Heart left ventricle (tissue), 16 donors: ENCODE measurements at regions of chr7 and their contacts with region 1.

Region 1: GRCh38 chr7:37181550-37181932 is 267.1 kb downstream of the ELMO1 start:
- DNase-seq: no peak
- ATAC-seq: no peak
- H3K4me3 ChIP-seq: no peak overlapping the region
- H3K27ac ChIP-seq: no peak overlapping the region
- H3K4me1 ChIP-seq: peaks cover 0 to 8% (median 0%) of the 10 kb centered on the region in 12 donors
- H3K27me3 ChIP-seq: no peaks in the 10 kb centered on the region
- CTCF ChIP-seq: no peak
- POLR2A ChIP-seq: no peak

Region 2: DNA sequence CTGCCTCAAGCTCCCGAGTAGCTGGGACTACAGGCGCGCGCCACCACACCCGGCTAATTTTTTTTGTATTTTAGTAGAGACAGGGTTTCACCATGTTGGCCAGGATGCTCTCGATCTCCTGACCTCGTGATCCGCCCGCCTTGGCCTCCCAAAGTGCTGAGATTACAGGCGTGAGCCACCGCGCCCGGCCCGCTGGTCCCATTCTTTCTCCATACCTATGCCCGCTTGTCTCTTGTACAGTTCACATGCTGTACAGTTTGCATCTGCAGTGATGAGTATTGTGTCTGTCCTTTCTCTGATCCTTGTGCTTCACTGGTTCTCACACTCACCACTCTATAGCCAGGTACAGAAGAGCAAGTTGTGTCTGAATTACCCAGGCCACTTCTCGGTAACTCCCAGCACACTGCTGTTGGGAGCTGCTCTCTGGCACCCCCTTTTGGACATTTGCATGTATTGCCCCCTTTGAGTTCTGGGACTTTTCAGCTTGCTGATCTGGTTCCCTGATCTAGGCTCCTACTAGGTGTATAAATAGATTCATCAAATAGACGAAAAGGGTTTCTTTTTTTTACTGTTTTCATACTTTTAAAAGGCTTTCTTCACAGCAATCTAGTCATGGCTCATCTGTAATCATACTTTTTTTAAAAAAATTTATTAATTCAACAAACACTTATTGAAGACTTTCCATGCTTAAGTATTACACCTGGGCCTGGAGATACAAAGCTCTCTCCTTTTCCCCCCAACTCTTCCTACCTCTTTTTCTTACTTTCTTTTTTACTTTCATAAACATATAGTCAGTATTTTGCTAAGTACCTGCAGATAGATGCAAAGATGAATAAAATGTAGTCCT is 510.7 kb before region 1 on chr7:
- intact Hi-C with region 1: loop called in 1 of 10 experiments (anchors 10 kb)
- DNase-seq: peak in 3 of 5 donors; percentile 19 to 41 (median 35)
- ATAC-seq: peak in 3 of 4 donors; percentile 46 to 77 (median 48)
- H3K4me3 ChIP-seq: no peak overlapping the region
- H3K27ac ChIP-seq: no peak overlapping the region
- H3K4me1 ChIP-seq: no peaks in the 10 kb centered on the region
- H3K27me3 ChIP-seq: no peaks in the 10 kb centered on the region
- CTCF ChIP-seq: peak; percentile 63 to 89 (median 78)
- POLR2A ChIP-seq: no peak

Region 3: DNA sequence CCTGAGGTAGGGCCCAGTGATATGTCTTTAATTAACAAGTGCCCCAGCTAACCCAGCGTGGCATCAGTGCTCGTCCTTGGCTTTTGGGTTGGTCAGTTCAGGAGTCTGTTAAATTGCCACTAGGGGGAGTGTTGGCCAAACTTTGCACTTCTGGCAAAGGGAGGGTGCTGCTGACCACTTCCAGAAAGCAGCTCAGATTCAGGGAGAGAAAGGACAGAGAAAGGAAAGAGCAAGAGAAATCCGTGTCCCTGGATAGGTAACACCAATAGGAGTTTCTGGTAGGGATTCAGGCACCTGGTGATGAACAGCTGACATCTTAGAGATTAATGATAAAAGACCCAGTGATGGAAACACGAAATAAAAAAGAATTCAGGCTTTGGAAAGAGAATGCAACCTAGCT is 214.2 kb before region 1 on chr7:
- intact Hi-C with region 1: loop called (anchors 1 to 5 kb)
- DNase-seq: peak; percentile 59 to 67 (median 63)
- ATAC-seq: peak; percentile 85 to 94 (median 92)
- H3K4me3 ChIP-seq: no peak overlapping the region
- H3K27ac ChIP-seq: no peak overlapping the region
- H3K4me1 ChIP-seq: peaks cover 0 to 49% (median 7%) of the 10 kb centered on the region in 12 donors
- H3K27me3 ChIP-seq: no peaks in the 10 kb centered on the region
- CTCF ChIP-seq: peak; percentile 70 to 89 (median 84)
- POLR2A ChIP-seq: no peak

Region 4: DNA sequence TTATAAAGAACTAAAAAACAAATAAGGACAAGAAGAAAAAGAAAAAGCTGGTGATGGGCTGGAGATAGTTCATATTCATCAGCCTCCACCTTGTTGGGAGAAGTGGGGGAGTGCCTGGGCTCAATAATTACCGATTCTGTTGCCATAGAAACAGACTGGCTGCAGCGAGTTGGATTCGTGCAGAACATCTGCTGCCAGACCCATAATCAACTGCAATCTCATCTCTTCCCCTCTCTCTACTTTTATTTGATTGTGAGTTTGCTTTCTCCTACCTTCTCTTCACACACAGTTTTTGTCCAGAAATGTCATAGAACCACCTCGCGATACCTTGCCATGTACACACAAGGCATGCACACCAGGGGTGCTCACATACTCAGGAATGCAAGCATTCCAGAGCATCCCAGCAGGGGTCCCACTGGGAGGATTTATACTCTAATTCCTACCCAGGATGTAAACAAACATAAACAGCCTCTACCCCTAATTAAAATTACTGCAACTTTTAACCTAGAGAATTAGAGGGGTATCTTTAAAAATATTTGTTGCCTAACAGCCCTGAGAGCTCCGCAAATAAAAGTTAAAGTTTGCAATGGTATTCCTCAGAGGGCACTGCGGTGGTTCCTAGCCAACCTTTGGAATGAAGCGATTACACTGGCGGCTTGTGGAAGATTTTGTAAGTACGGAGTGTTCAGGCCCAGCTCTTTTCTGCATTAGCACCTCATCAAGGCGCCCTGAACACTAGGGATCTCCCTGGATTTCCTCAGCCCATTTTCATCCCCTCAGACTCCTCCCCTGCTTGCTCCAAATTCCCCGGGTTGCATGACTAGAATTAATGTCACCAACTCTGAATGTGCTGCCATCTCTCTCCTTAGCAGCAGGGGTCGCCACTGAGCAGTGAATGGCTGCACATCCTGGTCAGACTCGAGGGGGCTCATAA is 194.8 kb before region 1 on chr7:
- intact Hi-C with region 1: loop called (anchors 1 to 5 kb)
- DNase-seq: peak; percentile 47 to 75 (median 50)
- ATAC-seq: peak in 3 of 4 donors; percentile 56 to 65 (median 60)
- H3K4me3 ChIP-seq: no peak overlapping the region
- H3K27ac ChIP-seq: no peak overlapping the region
- H3K4me1 ChIP-seq: peaks cover 0 to 19% (median 9%) of the 10 kb centered on the region in 12 donors
- H3K27me3 ChIP-seq: peaks cover 0 to 3% (median 0%) of the 10 kb centered on the region in 9 donors
- CTCF ChIP-seq: peak; percentile 62 to 87 (median 80)
- POLR2A ChIP-seq: no peak